Transverse colon (tissue), 4 donors: ENCODE measurements at regions of chr15 and their contacts with region 1.

Region 1: DNA sequence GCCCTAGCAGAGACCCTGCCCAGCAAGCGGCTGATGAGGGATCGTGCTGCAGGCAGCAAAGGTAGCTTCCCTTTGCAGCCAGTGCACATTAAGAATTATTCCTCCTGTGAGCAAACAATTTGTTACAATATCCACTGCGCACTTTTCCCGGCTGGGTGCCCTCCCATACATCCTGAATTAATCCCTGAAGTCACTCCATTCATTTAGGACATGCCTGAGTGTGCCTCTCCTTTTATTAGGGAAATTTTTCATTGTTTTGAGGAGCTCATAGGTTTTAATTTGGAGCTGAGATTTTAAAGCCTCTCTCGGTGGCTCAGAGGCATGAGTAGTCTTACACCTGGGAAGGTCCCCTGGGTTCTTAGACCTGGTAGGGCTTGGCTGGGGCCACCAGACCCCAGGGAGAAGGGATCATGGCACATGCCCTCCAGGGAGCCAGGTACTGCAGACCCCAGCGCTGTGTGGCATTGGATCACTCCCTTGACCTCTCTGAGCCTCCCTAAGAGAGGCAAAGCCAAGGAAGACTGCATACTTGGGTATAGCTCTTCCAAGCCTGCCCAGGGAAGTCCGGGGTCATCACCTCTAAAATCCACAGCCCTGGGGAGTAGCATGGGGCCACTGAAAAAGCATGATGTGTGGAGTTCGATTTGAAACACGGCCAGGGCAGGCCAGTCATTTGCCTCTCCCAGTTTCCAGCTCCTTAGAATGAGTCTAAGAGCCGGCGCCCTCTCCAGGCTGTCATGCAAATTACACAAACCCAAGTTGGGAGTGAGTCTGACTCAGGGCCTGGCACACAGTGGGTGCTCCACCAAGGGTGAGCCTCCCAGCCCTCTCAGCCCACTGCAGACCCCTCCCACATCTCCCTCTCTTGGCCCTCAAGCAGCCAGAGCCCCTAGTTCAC is 151.9 kb upstream of the LINGO1 start:
- DNase-seq: no peak
- H3K4me3 ChIP-seq: no peak overlapping the region
- H3K27ac ChIP-seq: no peak overlapping the region
- H3K4me1 ChIP-seq: no peaks in the 10 kb centered on the region
- H3K27me3 ChIP-seq: peaks cover 13% of the 10 kb centered on the region
- CTCF ChIP-seq: peak in 2 of 5 experiments; percentile 9 to 22
- EP300 ChIP-seq: no peak
- POLR2A ChIP-seq: no peak

Region 2: DNA sequence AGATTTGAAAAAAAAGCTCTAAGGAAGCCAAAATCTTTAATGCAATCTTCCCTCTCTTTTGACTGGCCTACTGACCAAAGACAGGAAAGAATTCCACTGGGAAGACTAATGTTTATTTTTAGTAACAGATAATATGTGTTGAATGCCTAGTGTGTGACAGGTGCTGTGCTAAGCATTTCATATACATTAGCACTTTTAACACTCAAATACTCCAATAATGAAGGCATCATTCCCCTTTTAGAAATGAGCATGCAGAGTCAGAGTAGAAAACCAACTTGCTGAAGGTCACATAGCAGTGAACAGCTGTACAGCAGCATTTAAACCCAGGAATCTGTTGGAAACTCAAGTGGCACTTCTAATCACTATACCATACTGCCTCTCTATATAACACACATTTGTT is 1818.1 kb after region 1 on chr15:
- in situ Hi-C with region 1: no loop called
- intact Hi-C with region 1: loop called (anchors 5 kb)
- DNase-seq: no peak
- H3K4me3 ChIP-seq: no peak overlapping the region
- H3K27ac ChIP-seq: no peak overlapping the region
- H3K4me1 ChIP-seq: no peaks in the 10 kb centered on the region
- H3K27me3 ChIP-seq: peaks cover 3% of the 10 kb centered on the region
- CTCF ChIP-seq: no peak
- EP300 ChIP-seq: no peak
- POLR2A ChIP-seq: no peak